ENCODE measurements at regions of chr7 and their contacts with region 1.

Region 1: DNA sequence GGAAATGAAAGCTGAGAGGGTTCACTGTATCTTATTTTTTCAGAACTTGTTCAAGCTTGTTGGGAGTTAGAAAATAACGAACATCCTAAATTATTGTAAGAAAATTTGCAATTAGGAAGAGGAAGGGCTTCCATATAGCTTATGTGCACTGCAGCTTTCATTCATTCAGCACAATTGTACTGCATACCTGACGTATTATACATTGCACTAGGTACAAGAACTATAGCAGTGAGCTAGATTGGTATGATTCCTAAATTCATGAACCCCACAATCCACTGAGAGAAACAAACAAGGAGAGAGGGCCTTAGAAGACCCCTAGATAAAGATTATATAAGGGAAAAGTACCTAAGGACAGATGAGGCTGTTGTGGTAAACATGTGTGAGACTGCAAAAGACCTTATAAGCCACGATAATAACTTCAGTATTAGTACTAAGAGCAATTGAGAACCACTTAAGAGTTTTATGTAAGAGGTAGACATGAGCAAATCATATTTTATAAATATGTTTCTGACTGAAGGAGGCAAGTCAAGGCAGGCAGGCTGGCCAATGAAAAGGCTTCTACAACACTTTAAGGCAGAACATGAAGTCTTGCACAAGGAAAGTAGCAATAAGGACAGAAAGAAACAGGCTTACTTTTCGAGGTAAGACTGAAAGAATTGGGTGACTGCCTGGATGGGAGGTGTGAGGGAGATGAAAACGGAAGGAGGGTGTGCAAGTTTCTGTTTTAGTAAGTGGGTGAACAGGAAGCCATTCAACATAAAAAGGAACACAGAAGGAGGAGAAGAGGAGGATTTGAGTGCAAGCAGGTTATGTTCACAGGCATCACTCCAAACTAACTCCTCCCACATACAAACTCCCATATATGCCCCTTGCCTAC is 77.9 kb upstream of the LRRN3 start:
- DNase-seq: peak; percentile 61
- H3K4me3 Mint-ChIP-seq: peak overlapping the region; percentile 57
- H3K27ac Mint-ChIP-seq: peak overlapping the region; percentile 90
- H3K4me1 Mint-ChIP-seq: peaks cover 64% of the 10 kb centered on the region
- H3K27me3 Mint-ChIP-seq: no peaks in the 10 kb centered on the region

Region 2: DNA sequence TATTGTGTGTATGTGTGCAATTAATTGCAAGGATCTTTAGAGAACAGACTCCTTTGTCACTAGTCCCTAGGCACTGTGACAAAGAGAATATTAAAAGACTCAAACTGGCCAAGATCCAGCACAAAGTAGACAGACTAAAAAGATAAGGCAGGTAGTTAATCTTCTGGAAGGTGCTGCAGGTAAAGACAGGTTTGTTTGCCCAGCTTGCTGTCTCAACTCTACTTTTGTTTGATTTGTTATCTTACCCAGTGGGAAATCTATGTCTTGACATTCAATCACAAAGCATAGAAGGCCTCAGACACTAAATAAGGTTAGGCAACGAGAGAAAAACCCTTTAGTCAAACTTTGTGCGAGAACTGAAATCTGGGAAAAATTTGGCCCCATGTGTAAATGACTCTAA is 730.0 kb before region 1 on chr7:
- CTCF ChIA-PET with region 1: no interaction called
- POLR2A ChIA-PET with region 1: no interaction called
- DNase-seq: no peak
- H3K4me3 Mint-ChIP-seq: no peak overlapping the region
- H3K27ac Mint-ChIP-seq: no peak overlapping the region
- H3K4me1 Mint-ChIP-seq: no peaks in the 10 kb centered on the region
- H3K27me3 Mint-ChIP-seq: no peaks in the 10 kb centered on the region

Region 3: GRCh38 chr7:110977127-110977737 is 35.8 kb before region 1 on chr7:
- CTCF ChIA-PET with region 1: no interaction called
- POLR2A ChIA-PET with region 1: interaction called, 14 read pairs
- DNase-seq: no peak
- H3K4me3 Mint-ChIP-seq: peak overlapping the region; percentile 55
- H3K27ac Mint-ChIP-seq: peak overlapping the region; percentile 79
- H3K4me1 Mint-ChIP-seq: peaks cover 25% of the 10 kb centered on the region
- H3K27me3 Mint-ChIP-seq: no peaks in the 10 kb centered on the region

Region 4: DNA sequence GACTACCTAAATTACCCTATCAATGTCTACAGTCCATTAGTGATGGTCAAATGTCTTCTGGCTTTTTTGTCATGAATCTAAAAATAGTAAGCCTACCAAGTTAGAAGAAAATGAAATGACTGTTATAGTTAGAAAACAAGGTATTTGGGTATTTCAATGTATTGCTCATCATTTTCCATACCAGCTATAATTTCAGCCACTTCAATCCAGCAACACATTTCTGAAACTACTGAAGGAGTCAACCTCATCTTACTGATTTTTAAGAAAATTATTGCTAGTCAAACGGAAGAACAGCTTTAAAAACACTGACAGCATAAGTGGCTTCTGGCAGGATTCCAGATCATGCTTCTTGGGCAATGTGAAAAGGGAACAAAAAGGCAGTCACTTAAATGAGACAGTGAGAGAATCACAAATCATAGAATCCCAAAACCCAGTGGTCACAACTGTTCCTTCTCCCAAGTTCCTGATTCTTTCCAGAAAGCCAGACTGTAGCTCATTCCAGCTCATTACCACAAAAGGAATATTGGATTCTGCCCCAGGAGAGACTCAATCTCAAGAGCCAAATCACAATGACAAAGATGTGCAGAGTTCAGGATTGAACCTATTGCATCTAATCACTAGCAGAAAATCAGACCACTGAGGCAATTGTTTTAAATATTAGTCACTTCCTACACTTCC is 16.7 kb after region 1 on chr7:
- CTCF ChIA-PET with region 1: interaction called, 10 read pairs
- POLR2A ChIA-PET with region 1: interaction called, 34 read pairs
- DNase-seq: no peak
- H3K4me3 Mint-ChIP-seq: no peak overlapping the region
- H3K27ac Mint-ChIP-seq: peak overlapping the region; percentile 64
- H3K4me1 Mint-ChIP-seq: peaks cover 51% of the 10 kb centered on the region
- H3K27me3 Mint-ChIP-seq: no peaks in the 10 kb centered on the region

Region 5: GRCh38 chr7:111043533-111043932 is 30.5 kb after region 1 on chr7:
- CTCF ChIA-PET with region 1: no interaction called
- POLR2A ChIA-PET with region 1: no interaction called
- DNase-seq: no peak
- H3K4me3 Mint-ChIP-seq: no peak overlapping the region
- H3K27ac Mint-ChIP-seq: no peak overlapping the region
- H3K4me1 Mint-ChIP-seq: peaks cover 5% of the 10 kb centered on the region
- H3K27me3 Mint-ChIP-seq: no peaks in the 10 kb centered on the region

Region 6: DNA sequence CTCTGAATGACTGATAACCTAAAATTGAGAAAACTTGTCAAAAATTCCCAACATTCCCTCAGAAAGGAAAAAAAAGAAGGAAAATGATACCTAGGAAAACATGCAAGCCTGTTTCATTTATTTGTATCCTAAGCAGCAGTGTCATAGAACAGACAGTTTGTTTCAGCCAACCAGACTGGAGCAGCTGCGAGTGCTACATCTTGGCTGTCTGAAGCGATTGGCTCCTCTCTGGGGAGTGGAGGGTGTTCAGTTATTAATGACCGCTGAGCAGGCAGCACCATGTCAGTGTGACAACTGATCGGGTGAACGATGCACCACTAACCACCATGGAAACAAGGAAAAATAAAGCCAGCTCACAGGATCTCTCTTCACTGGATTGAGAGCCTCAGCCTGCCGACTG is 77.8 kb after region 1 on chr7 and contains the start of gene LRRN3:
- CTCF ChIA-PET with region 1: interaction called, 4 read pairs
- POLR2A ChIA-PET with region 1: interaction called, 16 read pairs
- DNase-seq: peak; percentile 38
- H3K4me3 Mint-ChIP-seq: peak within 1 kb of the TSS; percentile 69
- H3K27ac Mint-ChIP-seq: peak within 1 kb of the TSS; percentile 56
- H3K4me1 Mint-ChIP-seq: peaks cover 72% of the 10 kb centered on the region
- H3K27me3 Mint-ChIP-seq: no peaks in the 10 kb centered on the region
- total RNA-seq, gene LRRN3: 18.0 to 19.2 TPM

Measured in activated CD4-positive, alpha-beta memory T cell treated with anti-CD3 and anti-CD28 coated beads, Interleukin-2, amount 10 ng/mL, durations not matched to agents 7 days and 5 days (primary cell).